MCF 10A (cell line): ENCODE measurements at regions of chr1 and their contacts with region 1.

Region 1: GRCh38 chr1:161098210-161099068 is at the start of gene KLHDC9:
- DNase-seq: no peak
- H3K4me3 Mint-ChIP-seq: no peak within 1 kb of the TSS
- H3K27ac Mint-ChIP-seq: peak within 1 kb of the TSS; percentile 61
- H3K4me1 Mint-ChIP-seq: peaks cover 37% of the 10 kb centered on the region
- H3K27me3 Mint-ChIP-seq: no peaks in the 10 kb centered on the region
- CTCF ChIP-seq: no peak
- total RNA-seq, gene KLHDC9: not detected in 2 replicates

Region 2: DNA sequence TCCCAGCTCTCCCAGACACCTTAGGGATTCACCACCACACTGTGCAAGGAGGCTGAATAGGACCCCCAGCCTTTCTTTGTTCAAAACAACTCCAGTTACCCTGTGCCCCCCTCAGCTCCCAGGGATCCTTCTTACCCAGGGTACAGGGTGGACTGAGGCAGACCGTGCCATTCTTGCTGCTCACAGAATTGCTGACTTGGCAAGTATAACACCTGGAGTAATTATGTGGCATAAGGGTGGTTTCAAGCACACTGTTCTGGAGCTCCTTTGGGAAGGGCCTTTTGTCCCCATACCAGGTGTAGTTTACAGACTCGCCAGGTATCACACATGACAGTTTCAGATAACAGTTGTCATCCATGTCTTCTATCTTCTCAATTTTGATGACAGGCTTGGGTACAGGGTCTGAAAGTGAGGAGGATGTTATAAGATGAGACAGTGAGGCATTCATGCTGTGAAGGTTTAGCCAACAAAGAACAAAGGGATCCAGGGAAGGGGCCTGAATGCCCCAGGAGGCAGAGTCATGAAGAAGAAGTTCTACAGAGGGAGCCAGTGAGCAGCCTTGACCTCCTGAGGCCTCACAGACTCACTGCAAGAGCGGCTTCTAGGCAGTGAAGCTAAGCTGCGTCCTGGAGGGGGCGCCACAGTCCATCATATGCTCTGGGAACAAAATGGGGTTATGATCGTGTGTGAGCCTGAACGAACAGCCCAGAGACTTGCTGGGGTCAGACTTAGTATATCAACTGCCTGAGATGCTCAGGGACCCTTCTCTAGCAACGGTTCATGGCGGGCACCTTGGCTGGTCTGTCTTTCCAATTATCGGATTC is 417.2 kb before region 1 on chr1:
- CTCF ChIA-PET with region 1: interaction called, 3 read pairs
- POLR2A ChIA-PET with region 1: no interaction called
- intact Hi-C with region 1: loop called (anchors 2 kb)
- DNase-seq: peak; percentile 85
- H3K4me3 Mint-ChIP-seq: no peak overlapping the region
- H3K27ac Mint-ChIP-seq: no peak overlapping the region
- H3K4me1 Mint-ChIP-seq: no peaks in the 10 kb centered on the region
- H3K27me3 Mint-ChIP-seq: peaks cover 24% of the 10 kb centered on the region
- CTCF ChIP-seq: peak; percentile 84

Region 3: GRCh38 chr1:160987359-160988062 is 110.9 kb before region 1 on chr1:
- CTCF ChIA-PET with region 1: interaction called, 26 read pairs
- POLR2A ChIA-PET with region 1: interaction called, 3 read pairs
- intact Hi-C with region 1: no loop called
- DNase-seq: no peak
- H3K4me3 Mint-ChIP-seq: no peak overlapping the region
- H3K27ac Mint-ChIP-seq: no peak overlapping the region
- H3K4me1 Mint-ChIP-seq: no peaks in the 10 kb centered on the region
- H3K27me3 Mint-ChIP-seq: no peaks in the 10 kb centered on the region
- CTCF ChIP-seq: no peak

Region 4: DNA sequence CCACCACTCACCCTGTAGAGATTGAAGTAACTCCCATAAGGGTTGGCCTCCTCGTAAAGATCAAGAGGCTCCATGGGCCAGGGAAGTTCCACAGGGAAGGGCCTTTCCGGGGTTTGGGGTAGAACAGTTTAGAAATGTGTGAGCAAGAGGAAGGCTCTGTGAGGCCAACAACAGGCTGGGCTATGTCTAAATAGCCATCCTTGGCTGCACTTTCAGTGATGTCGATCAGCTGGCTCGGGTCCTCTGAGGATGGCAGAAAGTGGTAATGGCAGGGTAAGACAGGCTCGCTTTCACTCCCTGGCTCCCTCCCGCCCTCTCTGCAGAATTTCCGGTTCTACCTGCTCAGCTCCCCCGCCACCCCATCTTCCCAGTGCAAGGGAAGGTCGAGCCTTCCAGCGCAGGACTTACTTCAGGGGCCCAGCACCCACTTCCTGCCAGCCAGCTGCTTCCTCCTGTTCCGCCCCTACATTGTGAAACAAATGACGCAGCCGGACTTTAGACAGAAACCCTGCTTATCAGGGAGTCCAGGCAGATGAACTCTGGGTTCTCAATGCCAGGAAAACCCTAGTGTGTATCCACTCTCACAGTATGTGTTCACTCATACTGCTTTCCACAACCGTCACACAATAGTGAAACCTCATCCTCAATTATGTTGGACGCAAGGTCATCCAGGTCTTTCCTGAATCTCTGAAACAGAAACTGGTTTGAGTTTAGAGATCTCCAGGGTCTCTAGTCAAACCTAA is 84.8 kb before region 1 on chr1:
- CTCF ChIA-PET with region 1: interaction called, 11 read pairs
- POLR2A ChIA-PET with region 1: interaction called, 5 read pairs
- intact Hi-C with region 1: no loop called
- DNase-seq: peak; percentile 96
- H3K4me3 Mint-ChIP-seq: peak overlapping the region; percentile 70
- H3K27ac Mint-ChIP-seq: peak overlapping the region; percentile 93
- H3K4me1 Mint-ChIP-seq: peaks cover 44% of the 10 kb centered on the region
- H3K27me3 Mint-ChIP-seq: no peaks in the 10 kb centered on the region
- CTCF ChIP-seq: no peak

Region 5: DNA sequence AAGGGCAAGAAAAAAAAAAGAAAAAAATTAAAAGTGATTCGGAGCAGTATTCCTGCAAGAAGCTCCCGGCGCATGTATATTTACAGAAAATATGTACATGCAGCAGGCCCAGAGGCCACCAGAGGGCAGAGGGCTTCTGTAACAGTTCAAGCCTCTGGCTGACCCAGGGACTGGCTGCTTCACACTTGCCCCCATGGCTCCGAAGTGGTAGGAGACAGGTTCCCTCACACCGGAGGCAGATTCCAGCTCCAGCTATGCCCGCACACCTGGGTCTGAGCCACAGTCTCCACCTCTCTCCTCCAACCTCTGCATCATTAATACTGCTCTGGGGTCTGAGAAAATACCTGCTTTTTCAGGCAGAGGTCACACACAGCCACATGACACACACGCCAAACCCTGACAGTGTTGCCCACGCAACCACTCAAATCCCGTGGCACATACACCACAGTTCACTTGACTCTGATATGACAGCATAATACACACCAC is 26.5 kb before region 1 on chr1:
- CTCF ChIA-PET with region 1: interaction called, 331 read pairs
- POLR2A ChIA-PET with region 1: interaction called, 60 read pairs
- intact Hi-C with region 1: loop called (anchors 1 kb)
- DNase-seq: peak; percentile 73
- H3K4me3 Mint-ChIP-seq: peak overlapping the region; percentile 90
- H3K27ac Mint-ChIP-seq: peak overlapping the region; percentile 46
- H3K4me1 Mint-ChIP-seq: peaks cover 51% of the 10 kb centered on the region
- H3K27me3 Mint-ChIP-seq: no peaks in the 10 kb centered on the region
- CTCF ChIP-seq: peak; percentile 87

Region 6: DNA sequence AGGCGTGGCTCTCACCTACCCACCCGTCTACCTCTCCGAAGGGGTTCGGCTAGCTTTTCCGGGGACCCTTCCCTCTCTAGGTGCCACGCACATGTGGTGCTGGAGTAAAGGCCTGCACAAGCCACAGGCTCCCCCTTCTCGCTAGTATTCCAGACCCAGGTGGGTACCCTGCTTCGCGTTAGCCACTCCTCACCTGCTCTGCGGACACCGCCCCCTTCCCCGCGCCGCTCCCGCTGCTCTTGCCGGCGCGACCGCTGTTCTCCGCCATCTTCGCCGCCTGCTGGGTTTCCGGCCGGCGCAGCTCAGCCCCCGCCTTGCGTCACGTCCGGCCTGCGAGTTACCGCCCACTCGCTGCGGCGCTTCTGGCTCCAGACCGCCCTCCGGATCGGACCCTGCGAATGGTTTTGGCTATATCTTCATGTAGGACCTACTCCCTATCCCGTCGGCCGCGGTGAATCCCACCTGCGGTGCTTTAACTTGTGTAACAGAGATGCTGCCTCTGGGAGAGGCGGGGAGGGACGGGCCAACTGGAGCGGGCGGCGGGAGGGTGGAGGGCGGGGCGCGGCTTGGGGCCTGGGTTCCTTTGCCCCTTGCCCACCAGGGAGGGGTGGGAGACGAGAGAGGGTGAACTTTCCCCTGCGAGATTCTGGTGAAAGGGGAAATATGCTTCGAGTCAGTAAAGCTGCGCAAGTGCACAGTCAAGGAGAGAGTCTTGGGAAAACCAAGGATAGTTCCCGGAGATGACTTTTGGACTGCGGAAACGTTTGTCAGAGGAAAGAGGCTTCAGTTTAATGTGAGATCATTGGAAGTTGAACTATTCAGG is 19.5 kb after region 1 on chr1 and contains the starts of genes NIT1 and PFDN2:
- CTCF ChIA-PET with region 1: interaction called, 30 read pairs
- POLR2A ChIA-PET with region 1: interaction called, 29 read pairs
- intact Hi-C with region 1: no loop called
- DNase-seq: peak; percentile 85
- H3K4me3 Mint-ChIP-seq: peak within 1 kb of the TSS; percentile 97
- H3K27ac Mint-ChIP-seq: peak within 1 kb of the TSS; percentile 95
- H3K4me1 Mint-ChIP-seq: peaks cover 50% of the 10 kb centered on the region
- H3K27me3 Mint-ChIP-seq: no peaks in the 10 kb centered on the region
- CTCF ChIP-seq: no peak
- total RNA-seq, gene NIT1: 73.4 and 75.4 TPM in 2 replicates
- total RNA-seq, gene PFDN2: 514 and 683 TPM in 2 replicates

Region 7: DNA sequence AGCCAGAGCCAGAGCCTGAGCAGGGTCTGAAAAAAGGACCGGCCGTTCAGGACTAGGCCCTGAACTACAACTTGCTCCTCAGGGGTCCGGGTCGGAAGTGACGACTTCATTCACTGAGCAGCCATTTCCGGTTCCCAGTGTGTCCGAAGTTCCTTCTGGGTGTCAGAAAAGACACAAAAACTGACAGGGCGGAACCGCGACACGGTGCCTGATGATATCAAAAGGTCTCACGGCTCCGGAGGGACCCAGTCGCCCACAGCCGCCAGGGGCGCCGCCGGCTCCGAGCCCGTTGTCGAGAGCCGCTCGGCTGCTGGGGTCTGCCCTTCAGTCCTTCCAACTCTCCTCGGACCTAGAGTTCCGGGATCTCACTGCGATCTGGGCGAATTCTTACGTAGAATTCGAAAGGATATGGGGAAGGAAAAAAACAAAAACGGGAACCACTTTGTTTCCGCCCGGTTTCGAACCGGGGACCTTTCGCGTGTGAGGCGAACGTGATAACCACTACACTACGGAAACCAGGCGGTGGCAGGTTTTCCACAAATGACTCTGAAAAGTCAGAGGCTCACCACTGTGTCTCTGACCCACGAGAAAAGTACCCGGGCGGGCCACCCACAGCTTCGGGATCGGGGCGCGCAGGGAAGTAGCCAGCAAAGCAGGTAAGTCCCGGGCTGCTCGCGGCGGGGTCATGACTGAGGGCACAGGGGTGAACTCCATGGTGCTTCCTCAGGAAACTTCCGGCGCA is 301.0 kb after region 1 on chr1:
- CTCF ChIA-PET with region 1: no interaction called
- POLR2A ChIA-PET with region 1: no interaction called
- intact Hi-C with region 1: no loop called
- DNase-seq: peak; percentile 93
- H3K4me3 Mint-ChIP-seq: peak overlapping the region; percentile 82
- H3K27ac Mint-ChIP-seq: peak overlapping the region; percentile 100
- H3K4me1 Mint-ChIP-seq: peaks cover 18% of the 10 kb centered on the region
- H3K27me3 Mint-ChIP-seq: no peaks in the 10 kb centered on the region
- CTCF ChIP-seq: peak; percentile 57